MCF 10A (cell line): ENCODE measurements at regions of chr18 and their contacts with region 1.

Region 1: DNA sequence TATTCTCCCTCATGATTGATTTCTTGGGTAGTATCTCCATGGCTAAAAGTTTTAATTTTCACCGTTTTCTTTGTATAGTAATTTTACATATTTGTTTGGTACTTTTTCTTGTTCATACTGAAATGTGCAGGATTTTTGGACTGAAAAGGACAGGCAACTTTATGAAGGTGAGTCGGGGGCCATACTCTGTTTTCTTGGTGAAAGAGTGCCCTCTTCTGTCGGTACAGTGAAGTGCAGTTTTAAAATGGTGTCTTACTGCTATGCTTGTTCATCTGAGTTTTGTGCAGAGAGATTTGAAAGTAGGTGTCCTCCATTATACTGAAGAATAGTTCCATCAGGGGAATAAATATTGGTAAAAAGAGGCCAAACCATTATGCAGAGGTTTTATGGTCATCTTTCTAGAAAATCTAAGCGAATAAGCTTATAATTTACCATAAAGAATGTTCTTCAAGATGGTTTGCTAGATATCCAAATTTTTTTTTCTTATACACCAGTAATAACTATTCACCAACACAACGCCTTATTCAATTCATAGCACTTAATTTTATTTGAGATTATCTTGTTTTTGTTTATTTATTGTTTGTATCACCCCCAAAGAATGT is 8.7 kb upstream of the SERPINB13 start:
- DNase-seq: peak; percentile 67
- H3K4me3 Mint-ChIP-seq: no peak overlapping the region
- H3K27ac Mint-ChIP-seq: no peak overlapping the region
- H3K4me1 Mint-ChIP-seq: peaks cover 15% of the 10 kb centered on the region
- H3K27me3 Mint-ChIP-seq: no peaks in the 10 kb centered on the region
- CTCF ChIP-seq: peak; percentile 75

Region 2: GRCh38 chr18:63523660-63524059 is 54.8 kb before region 1 on chr18:
- CTCF ChIA-PET with region 1: interaction called, 535 read pairs
- POLR2A ChIA-PET with region 1: interaction called, 56 read pairs
- intact Hi-C with region 1: loop called (anchors 1 kb)
- DNase-seq: no peak
- H3K4me3 Mint-ChIP-seq: no peak overlapping the region
- H3K27ac Mint-ChIP-seq: no peak overlapping the region
- H3K4me1 Mint-ChIP-seq: peaks cover 6% of the 10 kb centered on the region
- H3K27me3 Mint-ChIP-seq: no peaks in the 10 kb centered on the region
- CTCF ChIP-seq: no peak

Region 3: GRCh38 chr18:63545000-63545399 is 33.5 kb before region 1 on chr18:
- CTCF ChIA-PET with region 1: interaction called, 16 read pairs
- POLR2A ChIA-PET with region 1: no interaction called
- intact Hi-C with region 1: no loop called
- DNase-seq: no peak
- H3K4me3 Mint-ChIP-seq: no peak overlapping the region
- H3K27ac Mint-ChIP-seq: no peak overlapping the region
- H3K4me1 Mint-ChIP-seq: peaks cover 4% of the 10 kb centered on the region
- H3K27me3 Mint-ChIP-seq: no peaks in the 10 kb centered on the region
- CTCF ChIP-seq: no peak

Region 4: GRCh38 chr18:63562284-63562683 is 16.2 kb before region 1 on chr18:
- CTCF ChIA-PET with region 1: interaction called, 14 read pairs
- POLR2A ChIA-PET with region 1: interaction called, 4 read pairs
- intact Hi-C with region 1: no loop called
- DNase-seq: no peak
- H3K4me3 Mint-ChIP-seq: no peak overlapping the region
- H3K27ac Mint-ChIP-seq: no peak overlapping the region
- H3K4me1 Mint-ChIP-seq: no peaks in the 10 kb centered on the region
- H3K27me3 Mint-ChIP-seq: peaks cover 8% of the 10 kb centered on the region
- CTCF ChIP-seq: no peak

Region 5: GRCh38 chr18:63697107-63697660 is 118.7 kb after region 1 on chr18:
- CTCF ChIA-PET with region 1: no interaction called
- POLR2A ChIA-PET with region 1: no interaction called
- intact Hi-C with region 1: no loop called
- DNase-seq: no peak
- H3K4me3 Mint-ChIP-seq: no peak overlapping the region
- H3K27ac Mint-ChIP-seq: no peak overlapping the region
- H3K4me1 Mint-ChIP-seq: no peaks in the 10 kb centered on the region
- H3K27me3 Mint-ChIP-seq: no peaks in the 10 kb centered on the region
- CTCF ChIP-seq: no peak

Region 6: DNA sequence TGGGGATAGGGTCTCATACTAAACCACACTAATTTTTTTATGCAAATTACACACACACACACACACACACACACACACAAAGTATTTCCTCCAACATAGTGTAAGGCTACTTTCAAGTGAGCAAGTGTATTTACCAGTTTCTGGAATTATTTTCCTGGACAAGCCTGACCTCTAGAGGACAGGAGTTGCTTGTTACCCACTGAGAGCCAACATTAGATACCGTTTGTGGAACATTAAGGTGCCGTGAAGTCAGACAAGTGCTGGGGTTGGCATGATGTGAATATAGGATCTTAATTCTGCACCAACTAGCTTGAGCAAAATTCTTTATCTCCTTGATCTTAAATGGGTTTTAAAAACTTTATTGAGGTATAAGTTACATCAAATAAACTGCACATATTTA is 269.7 kb after region 1 on chr18:
- CTCF ChIA-PET with region 1: interaction called, 52 read pairs
- POLR2A ChIA-PET with region 1: no interaction called
- intact Hi-C with region 1: loop called (anchors 2 kb)
- DNase-seq: peak; percentile 73
- H3K4me3 Mint-ChIP-seq: no peak overlapping the region
- H3K27ac Mint-ChIP-seq: no peak overlapping the region
- H3K4me1 Mint-ChIP-seq: no peaks in the 10 kb centered on the region
- H3K27me3 Mint-ChIP-seq: no peaks in the 10 kb centered on the region
- CTCF ChIP-seq: peak; percentile 64